Caco-2 (cell line): ENCODE measurements at regions of chr12 and their contacts with region 1.

Region 1: GRCh38 chr12:93121729-93122488 is 192.8 kb upstream of the EEA1 start:
- DNase-seq: no peak
- H3K4me3 ChIP-seq: peak overlapping the region; percentile 24
- H3K4me3 Mint-ChIP-seq: peak overlapping the region; percentile 74
- H3K27ac Mint-ChIP-seq: peak overlapping the region; percentile 95
- H3K4me1 ChIP-seq: peaks cover 67% of the 10 kb centered on the region
- H3K4me1 Mint-ChIP-seq: peaks cover 50% of the 10 kb centered on the region
- H3K27me3 ChIP-seq: no peaks in the 10 kb centered on the region
- H3K27me3 Mint-ChIP-seq: no peaks in the 10 kb centered on the region
- CTCF ChIP-seq: no peak

Region 2: DNA sequence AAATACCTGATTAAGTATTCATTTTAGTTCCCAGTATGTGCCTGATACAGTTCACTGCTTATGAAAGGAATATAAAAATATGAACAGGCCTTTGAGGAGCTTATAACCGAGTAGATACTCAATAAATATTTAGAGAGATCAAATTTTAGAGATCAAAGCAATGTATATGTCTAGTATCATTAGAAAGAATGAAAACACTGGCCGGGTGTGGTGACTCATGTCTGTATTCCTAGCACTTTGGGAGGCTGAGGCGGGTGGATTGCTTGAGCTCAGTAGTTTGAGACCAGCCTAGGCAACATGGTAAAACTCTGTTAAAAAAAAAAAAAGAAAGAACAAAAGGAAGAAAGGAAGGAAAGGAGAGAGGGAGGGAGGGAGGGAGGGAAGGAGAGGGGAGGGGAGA is 79.6 kb before region 1 on chr12:
- CTCF ChIA-PET with region 1: no interaction called
- POLR2A ChIA-PET with region 1: no interaction called
- intact Hi-C with region 1: loop called (anchors 1 kb)
- DNase-seq: peak; percentile 72 to 84
- H3K4me3 ChIP-seq: no peak overlapping the region
- H3K4me3 Mint-ChIP-seq: peak overlapping the region; percentile 37
- H3K27ac Mint-ChIP-seq: peak overlapping the region; percentile 87
- H3K4me1 ChIP-seq: peaks cover 46% of the 10 kb centered on the region
- H3K4me1 Mint-ChIP-seq: peaks cover 51% of the 10 kb centered on the region
- H3K27me3 ChIP-seq: no peaks in the 10 kb centered on the region
- H3K27me3 Mint-ChIP-seq: no peaks in the 10 kb centered on the region
- CTCF ChIP-seq: no peak

Region 3: GRCh38 chr12:93103154-93103553 is 18.8 kb before region 1 on chr12:
- CTCF ChIA-PET with region 1: interaction called, 3 read pairs
- POLR2A ChIA-PET with region 1: interaction called, 5 read pairs
- intact Hi-C with region 1: loop called (anchors 1 kb)
- DNase-seq: no peak
- H3K4me3 ChIP-seq: no peak overlapping the region
- H3K4me3 Mint-ChIP-seq: no peak overlapping the region
- H3K27ac Mint-ChIP-seq: peak overlapping the region; percentile 76
- H3K4me1 ChIP-seq: peaks cover 47% of the 10 kb centered on the region
- H3K4me1 Mint-ChIP-seq: peaks cover 44% of the 10 kb centered on the region
- H3K27me3 ChIP-seq: no peaks in the 10 kb centered on the region
- H3K27me3 Mint-ChIP-seq: no peaks in the 10 kb centered on the region
- CTCF ChIP-seq: no peak

Region 4: DNA sequence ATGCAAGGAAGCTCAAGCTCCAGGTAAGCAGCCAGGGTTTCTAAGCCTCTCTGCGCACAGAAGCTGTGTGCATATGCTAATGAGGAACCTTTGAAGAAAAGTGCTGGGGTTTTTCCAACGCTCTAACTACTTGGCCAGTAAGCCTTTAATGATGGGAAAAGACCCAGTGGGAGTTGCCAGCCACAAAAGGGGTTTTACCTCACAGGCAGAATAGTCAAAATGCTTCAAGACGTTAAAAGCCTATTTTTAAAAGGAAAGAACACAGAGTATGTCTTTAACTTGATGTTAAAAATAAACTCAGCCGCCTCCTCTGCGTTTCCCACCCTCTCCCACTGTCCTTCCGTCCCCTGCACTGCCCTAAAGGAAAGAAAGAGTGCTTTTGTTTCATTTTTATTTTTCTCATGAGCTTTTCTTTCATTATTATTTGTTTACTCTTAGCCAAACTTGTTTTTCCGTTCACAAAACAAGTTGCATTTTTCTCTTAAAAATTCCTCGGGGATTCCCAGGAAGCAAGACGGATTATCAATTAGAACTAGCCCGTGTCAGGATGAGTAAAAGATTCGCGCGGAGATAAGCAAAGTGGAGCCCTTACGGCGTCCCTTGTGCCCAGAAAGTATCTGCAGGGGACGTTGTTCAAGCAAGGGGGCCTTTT is 46.1 kb after region 1 on chr12:
- CTCF ChIA-PET with region 1: no interaction called
- POLR2A ChIA-PET with region 1: interaction called, 3 read pairs
- intact Hi-C with region 1: loop called (anchors 2 kb)
- DNase-seq: peak in 1 of 2 experiments; percentile 48
- H3K4me3 ChIP-seq: peak overlapping the region; percentile 28
- H3K4me3 Mint-ChIP-seq: peak overlapping the region; percentile 72
- H3K27ac Mint-ChIP-seq: peak overlapping the region; percentile 85
- H3K4me1 ChIP-seq: peaks cover 44% of the 10 kb centered on the region
- H3K4me1 Mint-ChIP-seq: peaks cover 41% of the 10 kb centered on the region
- H3K27me3 ChIP-seq: no peaks in the 10 kb centered on the region
- H3K27me3 Mint-ChIP-seq: no peaks in the 10 kb centered on the region
- CTCF ChIP-seq: no peak